ENCODE measurements at regions of chr6 and their contacts with region 1.

Region 1: GRCh38 chr6:117449549-117450439 is 24.1 kb upstream of the ROS1 start:
- DNase-seq: peak; percentile 62
- H3K4me3 ChIP-seq: no peak overlapping the region
- H3K27ac ChIP-seq: no peak overlapping the region
- H3K4me1 ChIP-seq: no peaks in the 10 kb centered on the region
- CTCF ChIP-seq: peak; percentile 86

Region 2: GRCh38 chr6:117555882-117556498 is 106.2 kb after region 1 on chr6:
- CTCF ChIA-PET with region 1: no interaction called
- POLR2A ChIA-PET with region 1: interaction called, 3 read pairs
- intact Hi-C with region 1: loop called (anchors 2 kb)
- DNase-seq: peak; percentile 32
- H3K4me3 ChIP-seq: no peak overlapping the region
- H3K27ac ChIP-seq: no peak overlapping the region
- H3K4me1 ChIP-seq: no peaks in the 10 kb centered on the region
- CTCF ChIP-seq: peak; percentile 95

Region 3: GRCh38 chr6:117829594-117830319 is 380.0 kb after region 1 on chr6:
- CTCF ChIA-PET with region 1: no interaction called
- POLR2A ChIA-PET with region 1: no interaction called
- intact Hi-C with region 1: loop called (anchors 10 kb)
- DNase-seq: no peak
- H3K4me3 ChIP-seq: no peak overlapping the region
- H3K27ac ChIP-seq: no peak overlapping the region
- H3K4me1 ChIP-seq: no peaks in the 10 kb centered on the region
- CTCF ChIP-seq: peak; percentile 37; the same call in 1 of the 2 replicates

Measured in OCI-LY7 (cell line).